Gastrocnemius medialis (tissue), 4 donors: ENCODE measurements at regions of chr5 and their contacts with region 1.

Region 1: DNA sequence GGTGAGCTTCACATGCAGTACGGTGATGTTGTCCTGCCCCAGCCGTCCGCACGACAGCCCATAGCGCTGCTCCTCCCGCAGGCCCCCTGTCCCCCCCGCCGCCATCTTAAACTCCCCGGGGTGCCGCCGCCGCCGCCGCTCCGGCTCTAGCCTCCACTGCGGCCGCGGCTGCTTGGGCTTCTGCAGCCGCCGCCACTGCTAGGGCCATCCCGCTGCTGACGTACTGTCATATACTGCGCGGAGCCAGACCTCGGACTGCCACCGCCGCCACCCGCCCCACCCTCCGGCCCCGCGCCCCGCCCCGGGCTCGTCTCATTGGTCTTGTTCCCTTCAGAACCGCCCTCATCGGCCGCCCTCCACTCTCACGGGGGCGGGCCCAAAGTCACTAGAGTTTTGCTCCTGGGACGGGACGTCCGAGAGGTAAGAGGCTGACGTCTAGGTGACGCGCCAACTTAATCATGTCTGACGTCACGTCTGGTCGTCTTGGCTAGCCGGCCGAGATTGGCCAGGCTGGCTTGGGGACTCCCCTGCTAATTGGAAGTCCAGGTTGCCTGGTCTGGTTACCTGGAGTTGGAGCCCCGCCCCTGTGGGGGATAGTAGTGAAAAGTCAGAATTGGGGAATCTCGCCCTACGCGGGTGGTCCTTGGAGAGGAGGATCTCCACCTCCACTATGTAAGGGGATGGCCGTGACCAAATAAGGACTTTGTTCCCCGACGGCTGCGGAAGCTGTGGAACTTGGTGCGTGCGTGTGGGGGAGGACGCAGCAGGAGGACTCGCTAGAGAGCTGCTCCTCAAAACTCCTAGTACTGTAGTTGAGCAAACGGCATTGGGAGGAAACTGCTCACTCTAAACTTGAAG is at the start of gene ELL2:
- DNase-seq: peak; percentile 96 to 98
- ATAC-seq: peak; percentile 77 to 80
- H3K4me3 ChIP-seq: peak within 1 kb of the TSS; percentile 76 to 97 (median 89)
- H3K27ac ChIP-seq: peak within 1 kb of the TSS; percentile 91 to 99 (median 98)
- H3K4me1 ChIP-seq: peaks cover 17 to 26% of the 10 kb centered on the region in 2 donors
- H3K27me3 ChIP-seq: no peaks in the 10 kb centered on the region
- CTCF ChIP-seq: no peak
- POLR2A ChIP-seq: peak; percentile 91 to 95
- total RNA-seq, gene ELL2: 35.2 to 64.5 (median 42.9) TPM

Region 2: GRCh38 chr5:95730730-95731570 is 230.9 kb before region 1 on chr5 and contains the start of gene RHOBTB3:
- in situ Hi-C with region 1: no loop called
- intact Hi-C with region 1: loop called (anchors 10 kb)
- DNase-seq: peak; percentile 89 to 91
- ATAC-seq: peak; percentile 69 to 72
- H3K4me3 ChIP-seq: peak within 1 kb of the TSS; percentile 80 to 87 (median 85)
- H3K27ac ChIP-seq: peak within 1 kb of the TSS; percentile 91 to 96 (median 94)
- H3K4me1 ChIP-seq: peaks cover 39 to 48% of the 10 kb centered on the region in 2 donors
- H3K27me3 ChIP-seq: no peaks in the 10 kb centered on the region
- CTCF ChIP-seq: peak in 1 of 5 experiments; percentile 16
- POLR2A ChIP-seq: peak; percentile 88 to 92
- total RNA-seq, gene RHOBTB3: 40.1 to 134 (median 86.9) TPM

Region 3: GRCh38 chr5:95858661-95859326 is 103.1 kb before region 1 on chr5:
- in situ Hi-C with region 1: loop called in 2 of 4 experiments (anchors 5 to 10 kb)
- intact Hi-C with region 1: loop called (anchors 1 kb)
- DNase-seq: peak; percentile 88 to 92
- ATAC-seq: peak; percentile 35 to 37
- H3K4me3 ChIP-seq: peak overlapping the region; percentile 5 to 36 (median 12)
- H3K27ac ChIP-seq: peak overlapping the region; percentile 86 to 94 (median 89)
- H3K4me1 ChIP-seq: peaks cover 70 to 76% of the 10 kb centered on the region in 2 donors
- H3K27me3 ChIP-seq: no peaks in the 10 kb centered on the region
- CTCF ChIP-seq: peak; percentile 98 to 100 (median 99)
- POLR2A ChIP-seq: peak; percentile 29 to 58

Region 4: GRCh38 chr5:96079075-96079474 is 117.2 kb after region 1 on chr5:
- in situ Hi-C with region 1: no loop called
- intact Hi-C with region 1: loop called (anchors 5 kb)
- DNase-seq: peak in 1 of 2 donors; percentile 12
- ATAC-seq: peak; percentile 97 to 99
- H3K4me3 ChIP-seq: no peak overlapping the region
- H3K27ac ChIP-seq: peak overlapping the region in 1 of 4 donors; percentile 68
- H3K4me1 ChIP-seq: peaks cover 0 to 6% of the 10 kb centered on the region in 2 donors
- H3K27me3 ChIP-seq: no peaks in the 10 kb centered on the region
- CTCF ChIP-seq: no peak
- POLR2A ChIP-seq: peak in 1 of 2 donors; percentile 13

Region 5: DNA sequence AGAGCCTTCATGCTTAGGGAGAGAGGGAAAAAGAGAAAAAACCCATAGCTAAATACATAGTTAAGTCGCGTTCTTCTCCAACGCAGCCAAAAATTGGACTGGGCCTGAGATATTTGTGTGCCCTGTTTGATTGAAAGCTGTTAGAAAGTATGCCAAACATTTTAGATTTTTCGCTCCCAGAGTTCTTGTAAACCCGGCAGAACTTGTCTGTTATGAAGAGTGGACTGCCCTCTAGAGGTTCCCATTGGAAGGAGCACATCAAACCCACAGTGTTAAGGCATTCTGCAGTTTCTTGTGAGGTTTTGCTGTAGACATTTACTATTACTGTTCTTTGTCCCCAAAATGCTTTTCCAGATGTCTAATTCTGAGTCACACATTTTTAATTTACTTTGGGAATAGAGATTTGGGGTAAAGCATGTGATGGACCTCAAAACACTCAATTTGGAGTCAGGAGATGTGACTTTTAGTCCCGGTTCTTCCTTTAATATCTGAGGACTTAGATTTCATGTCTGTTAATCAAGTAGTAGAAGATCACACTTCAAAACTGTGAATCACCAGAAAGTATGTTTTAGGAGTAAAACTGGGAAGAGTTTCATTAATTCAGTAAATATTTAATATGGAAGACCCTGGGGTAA is 374.6 kb after region 1 on chr5:
- in situ Hi-C with region 1: loop called (anchors 10 to 25 kb)
- intact Hi-C with region 1: loop called (anchors 1 kb)
- DNase-seq: peak; percentile 63 to 75
- ATAC-seq: peak; percentile 71
- H3K4me3 ChIP-seq: peak overlapping the region in 2 of 4 donors; percentile 8 to 13
- H3K27ac ChIP-seq: peak overlapping the region; percentile 77 to 89 (median 85)
- H3K4me1 ChIP-seq: peaks cover 32 to 46% of the 10 kb centered on the region in 2 donors
- H3K27me3 ChIP-seq: no peaks in the 10 kb centered on the region
- CTCF ChIP-seq: peak; percentile 48 to 89 (median 79)
- POLR2A ChIP-seq: no peak

Region 6: DNA sequence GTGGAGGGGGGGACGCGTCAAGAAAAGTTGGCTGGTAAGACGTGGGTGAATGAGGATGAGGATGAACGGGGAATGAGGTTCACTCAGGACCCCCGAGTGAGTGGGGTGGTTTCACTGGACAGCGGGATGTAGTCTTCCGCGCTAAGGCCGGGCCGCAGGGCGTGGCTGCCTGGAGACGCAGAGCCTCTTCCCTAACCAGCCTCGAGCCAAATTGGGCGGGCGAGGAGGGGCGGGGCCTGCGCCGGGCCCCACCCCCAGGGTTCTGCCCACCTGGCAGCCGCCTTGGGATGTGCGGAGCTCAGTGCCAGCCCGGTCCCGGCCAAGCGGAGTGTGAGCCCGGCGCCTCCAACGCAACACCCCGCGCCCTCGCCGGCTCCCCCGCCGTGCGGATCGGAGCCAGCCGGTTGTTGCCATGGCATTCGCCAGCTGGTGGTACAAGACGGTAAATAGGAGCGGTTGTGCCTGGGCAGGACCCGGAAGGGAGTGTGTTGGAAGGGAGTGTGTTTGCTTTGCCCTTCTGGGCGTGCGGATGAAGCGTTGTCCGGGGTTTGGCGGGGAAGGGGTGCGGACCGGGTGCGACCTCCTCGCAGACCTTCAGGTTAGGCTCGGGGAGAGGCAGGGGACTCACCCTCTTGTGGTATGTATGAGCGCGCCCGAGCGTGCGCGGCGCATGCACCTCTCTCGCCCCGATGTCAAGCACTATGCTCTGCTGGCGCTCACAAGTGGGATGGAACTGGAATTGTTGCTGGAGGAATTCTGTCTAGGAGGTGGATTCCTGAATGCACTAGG is 701.1 kb after region 1 on chr5:
- in situ Hi-C with region 1: no loop called
- intact Hi-C with region 1: loop called (anchors 5 kb)
- DNase-seq: peak; percentile 88 to 94
- ATAC-seq: peak; percentile 80 to 84
- H3K4me3 ChIP-seq: peak overlapping the region; percentile 72 to 98 (median 88)
- H3K27ac ChIP-seq: peak overlapping the region; percentile 94 to 98 (median 96)
- H3K4me1 ChIP-seq: peaks cover 25 to 28% of the 10 kb centered on the region in 2 donors
- H3K27me3 ChIP-seq: no peaks in the 10 kb centered on the region
- CTCF ChIP-seq: peak in 2 of 5 experiments; percentile 4 to 19
- POLR2A ChIP-seq: peak; percentile 89